A673 (cell line): ENCODE measurements at regions of chr12 and their contacts with region 1.

Region 1: DNA sequence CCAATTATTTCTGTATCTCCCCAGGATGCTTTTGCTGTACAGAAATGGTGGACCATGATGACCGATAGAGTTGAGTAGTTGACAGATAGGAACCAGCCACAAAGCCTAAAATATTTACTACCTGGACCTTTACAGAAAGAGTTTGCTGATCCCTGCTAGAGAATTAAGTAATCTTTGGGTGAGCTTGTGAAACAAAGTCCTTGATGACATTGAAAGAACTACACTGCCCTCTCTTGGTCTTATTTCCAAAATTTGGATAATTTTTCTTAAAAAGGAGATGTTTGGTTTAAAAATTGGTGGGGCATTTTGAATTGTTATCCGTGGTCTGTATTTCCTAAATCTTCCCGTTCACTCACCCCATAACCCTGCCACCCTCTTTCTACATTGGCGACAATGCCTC is 13.7 kb upstream of the TCTN1 start:
- DNase-seq: peak; percentile 77
- H3K4me3 ChIP-seq: no peak overlapping the region
- H3K27ac ChIP-seq: no peak overlapping the region
- H3K4me1 ChIP-seq: no peaks in the 10 kb centered on the region
- H3K27me3 ChIP-seq: no peaks in the 10 kb centered on the region
- CTCF ChIP-seq: peak; percentile 60

Region 2: GRCh38 chr12:110100315-110100970 is 499.8 kb before region 1 on chr12:
- CTCF ChIA-PET with region 1: no interaction called
- POLR2A ChIA-PET with region 1: no interaction called
- intact Hi-C with region 1: loop called (anchors 2 kb)
- DNase-seq: peak; percentile 87
- H3K4me3 ChIP-seq: no peak overlapping the region
- H3K27ac ChIP-seq: no peak overlapping the region
- H3K4me1 ChIP-seq: peaks cover 10% of the 10 kb centered on the region
- H3K27me3 ChIP-seq: no peaks in the 10 kb centered on the region
- CTCF ChIP-seq: peak; percentile 94

Region 3: DNA sequence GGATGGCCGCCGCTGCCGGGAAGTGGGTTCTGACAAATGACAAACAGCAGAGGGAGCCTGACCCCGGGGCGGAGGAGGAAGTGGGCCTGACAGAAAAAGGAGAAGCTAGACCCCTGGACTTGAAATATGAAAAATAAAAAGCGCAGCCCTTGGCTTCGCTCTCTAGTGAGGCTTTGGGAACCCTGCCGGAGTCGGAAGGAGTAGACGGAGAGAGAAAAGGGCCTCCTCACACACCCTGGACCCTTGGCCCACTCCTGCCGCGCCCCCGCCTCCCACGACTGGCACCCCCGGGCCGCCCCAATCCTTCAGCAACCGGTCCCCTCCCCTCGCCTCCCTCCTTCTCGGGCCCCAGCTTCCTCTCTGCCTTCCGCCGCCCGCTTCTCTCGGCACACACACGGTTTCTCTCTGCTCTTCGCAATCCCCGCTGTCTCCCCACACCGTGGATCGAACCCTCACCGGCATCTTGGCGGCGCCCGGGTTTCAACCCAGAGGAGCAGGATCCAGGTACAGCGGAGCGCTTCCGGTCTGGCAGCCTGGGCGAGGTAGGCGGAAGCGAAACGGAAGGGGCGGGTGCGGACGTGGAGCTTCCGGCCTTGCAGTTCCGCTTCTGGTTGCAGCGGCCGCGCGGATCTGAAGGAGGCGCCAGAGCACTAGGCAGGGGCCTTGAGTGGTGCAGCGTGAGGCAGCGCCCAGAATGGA is 150.3 kb before region 1 on chr12 and contains the start of gene ARPC3:
- CTCF ChIA-PET with region 1: interaction called, 21 read pairs
- POLR2A ChIA-PET with region 1: no interaction called
- intact Hi-C with region 1: loop called (anchors 1 kb)
- DNase-seq: peak; percentile 97
- H3K4me3 ChIP-seq: peak within 1 kb of the TSS; percentile 100
- H3K27ac ChIP-seq: peak within 1 kb of the TSS; percentile 89
- H3K4me1 ChIP-seq: no peaks in the 10 kb centered on the region
- H3K27me3 ChIP-seq: no peaks in the 10 kb centered on the region
- CTCF ChIP-seq: peak; percentile 93
- total RNA-seq, gene ARPC3: 234 and 235 TPM in 2 replicates

Region 4: DNA sequence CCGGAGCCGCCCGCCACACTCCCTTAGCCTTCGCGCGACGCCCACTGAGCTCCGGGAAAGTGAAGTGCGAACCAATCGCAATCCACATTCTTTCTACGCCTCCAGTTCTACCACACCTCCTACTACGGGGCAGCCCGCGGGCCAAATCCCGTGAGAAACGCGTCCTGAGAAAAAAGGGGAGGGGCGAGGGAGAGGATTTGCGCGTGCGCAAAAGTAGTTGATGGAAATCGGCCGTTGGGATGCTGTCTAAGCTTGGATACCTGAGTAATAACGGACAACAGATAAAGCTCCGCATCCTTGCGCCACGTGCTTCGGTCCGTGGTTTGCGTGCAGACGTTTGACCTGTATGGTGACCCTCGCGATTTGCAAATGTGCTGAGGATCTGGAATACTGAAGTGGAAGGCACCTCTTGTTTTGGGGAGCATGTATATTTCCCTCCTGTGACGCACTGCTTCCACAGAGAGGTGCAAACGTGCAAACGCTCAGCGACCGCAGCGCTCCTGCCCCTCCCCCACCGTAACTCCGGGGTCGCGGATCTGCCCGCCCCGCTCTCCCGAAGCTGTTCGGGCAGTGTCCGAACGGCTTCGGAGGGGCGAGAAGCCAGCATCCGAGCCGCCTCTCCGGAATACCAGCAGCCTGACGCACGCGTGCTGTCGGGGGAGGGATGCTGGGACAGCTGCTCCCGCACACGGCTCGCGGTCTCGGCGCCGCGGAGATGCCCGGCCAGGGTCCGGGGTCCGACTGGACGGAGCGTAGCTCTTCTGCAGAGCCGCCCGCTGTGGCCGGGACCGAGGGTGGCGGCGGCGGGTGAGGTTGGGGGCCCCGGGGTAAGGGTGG is 131.8 kb before region 1 on chr12 and contains the starts of genes FAM216A and GPN3:
- CTCF ChIA-PET with region 1: interaction called, 5 read pairs
- POLR2A ChIA-PET with region 1: no interaction called
- intact Hi-C with region 1: loop called (anchors 2 kb)
- DNase-seq: peak; percentile 99
- H3K4me3 ChIP-seq: peak within 1 kb of the TSS; percentile 83
- H3K27ac ChIP-seq: peak within 1 kb of the TSS; percentile 89
- H3K4me1 ChIP-seq: peaks cover 10% of the 10 kb centered on the region
- H3K27me3 ChIP-seq: no peaks in the 10 kb centered on the region
- CTCF ChIP-seq: no peak
- total RNA-seq, gene FAM216A: 14.0 and 17.5 TPM in 2 replicates
- total RNA-seq, gene GPN3: 51.4 and 52.7 TPM in 2 replicates

Region 5: GRCh38 chr12:110508071-110508586 is 92.1 kb before region 1 on chr12:
- CTCF ChIA-PET with region 1: interaction called, 9 read pairs
- POLR2A ChIA-PET with region 1: no interaction called
- intact Hi-C with region 1: loop called (anchors 1 kb)
- DNase-seq: no peak
- H3K4me3 ChIP-seq: no peak overlapping the region
- H3K27ac ChIP-seq: no peak overlapping the region
- H3K4me1 ChIP-seq: peaks cover 7% of the 10 kb centered on the region
- H3K27me3 ChIP-seq: no peaks in the 10 kb centered on the region
- CTCF ChIP-seq: no peak

Region 6: DNA sequence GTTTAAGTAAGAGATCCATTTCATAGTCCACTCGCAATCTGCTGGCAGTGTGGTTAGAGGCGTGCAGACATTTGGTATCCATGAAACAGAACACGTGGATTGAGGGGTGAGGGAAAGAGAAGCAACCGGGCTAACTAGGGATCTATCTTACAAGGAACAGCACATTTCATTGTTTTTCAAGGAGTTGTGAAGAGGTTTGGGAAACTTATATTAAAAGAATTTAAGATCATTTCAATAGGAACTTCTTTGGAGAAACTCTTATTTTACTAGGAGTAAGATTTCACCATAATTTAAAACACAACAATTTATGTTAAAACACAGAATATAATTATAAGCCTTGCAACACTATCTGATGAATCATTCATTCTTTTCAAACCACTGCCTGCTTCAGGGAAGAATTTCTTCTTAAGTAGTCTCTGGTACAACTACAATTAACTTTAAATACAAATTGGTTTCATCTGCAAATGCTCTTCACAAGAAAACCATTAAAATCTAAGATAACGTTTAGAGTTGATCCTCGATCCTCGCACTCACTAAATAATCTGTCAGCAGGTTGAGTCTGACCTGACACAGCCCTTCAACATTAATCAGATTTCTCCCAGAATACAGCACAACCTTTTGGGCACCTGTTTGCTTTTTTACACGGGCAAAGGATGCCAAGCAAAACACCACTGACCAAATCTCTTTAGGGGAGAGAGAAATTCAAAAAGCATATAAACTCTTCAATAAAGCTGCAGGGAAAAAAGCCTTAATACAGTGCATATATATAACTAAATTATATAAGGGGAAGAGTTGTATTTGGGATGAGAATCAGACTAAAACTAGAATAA is 44.5 kb before region 1 on chr12:
- CTCF ChIA-PET with region 1: interaction called, 7 read pairs
- POLR2A ChIA-PET with region 1: no interaction called
- intact Hi-C with region 1: loop called (anchors 1 kb)
- DNase-seq: peak; percentile 55
- H3K4me3 ChIP-seq: peak overlapping the region; percentile 9
- H3K27ac ChIP-seq: peak overlapping the region; percentile 41
- H3K4me1 ChIP-seq: peaks cover 35% of the 10 kb centered on the region
- H3K27me3 ChIP-seq: no peaks in the 10 kb centered on the region
- CTCF ChIP-seq: no peak